PC-9 (cell line): ENCODE measurements at regions of chr2 and their contacts with region 1.

Region 1: GRCh38 chr2:227655454-227655853 is 11.2 kb upstream of the SCYGR5 start:
- DNase-seq: peak; percentile 12 to 81
- H3K4me3 ChIP-seq: no peak overlapping the region
- H3K27ac ChIP-seq: no peak overlapping the region
- H3K4me1 ChIP-seq: peaks cover 15% of the 10 kb centered on the region
- H3K27me3 ChIP-seq: no peaks in the 10 kb centered on the region
- CTCF ChIP-seq: no peak

Region 2: DNA sequence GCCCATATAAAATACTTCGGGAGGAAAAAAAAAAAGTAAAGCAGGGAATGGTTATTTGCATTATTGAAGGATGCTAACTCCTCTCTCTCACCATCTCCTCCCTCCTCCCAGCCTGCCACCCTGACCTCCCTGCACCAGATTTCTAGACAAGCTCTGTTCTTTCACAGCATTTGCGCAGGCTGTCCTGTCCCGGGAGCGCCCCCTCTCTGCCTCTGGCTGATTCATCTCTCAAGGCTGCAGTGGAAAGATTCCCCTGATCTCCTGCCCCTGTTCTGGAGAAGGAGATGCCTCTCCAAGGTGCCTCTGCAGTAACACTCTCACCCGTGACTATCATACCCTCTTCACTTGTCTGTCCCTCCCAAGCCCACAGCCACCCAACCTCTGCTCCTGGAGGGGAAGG is 529.9 kb before region 1 on chr2:
- CTCF ChIA-PET with region 1: no interaction called
- POLR2A ChIA-PET with region 1: no interaction called
- intact Hi-C with region 1: loop called (anchors 10 kb)
- DNase-seq: no peak
- H3K4me3 ChIP-seq: no peak overlapping the region
- H3K27ac ChIP-seq: no peak overlapping the region
- H3K4me1 ChIP-seq: no peaks in the 10 kb centered on the region
- H3K27me3 ChIP-seq: no peaks in the 10 kb centered on the region
- CTCF ChIP-seq: no peak

Region 3: GRCh38 chr2:227703280-227703732 is 47.9 kb after region 1 on chr2:
- CTCF ChIA-PET with region 1: no interaction called
- POLR2A ChIA-PET with region 1: no interaction called
- intact Hi-C with region 1: loop called (anchors 5 kb)
- DNase-seq: peak; percentile 75 to 94
- H3K4me3 ChIP-seq: peak overlapping the region; percentile 41
- H3K27ac ChIP-seq: peak overlapping the region; percentile 92
- H3K4me1 ChIP-seq: peaks cover 37% of the 10 kb centered on the region
- H3K27me3 ChIP-seq: no peaks in the 10 kb centered on the region
- CTCF ChIP-seq: no peak

Region 4: DNA sequence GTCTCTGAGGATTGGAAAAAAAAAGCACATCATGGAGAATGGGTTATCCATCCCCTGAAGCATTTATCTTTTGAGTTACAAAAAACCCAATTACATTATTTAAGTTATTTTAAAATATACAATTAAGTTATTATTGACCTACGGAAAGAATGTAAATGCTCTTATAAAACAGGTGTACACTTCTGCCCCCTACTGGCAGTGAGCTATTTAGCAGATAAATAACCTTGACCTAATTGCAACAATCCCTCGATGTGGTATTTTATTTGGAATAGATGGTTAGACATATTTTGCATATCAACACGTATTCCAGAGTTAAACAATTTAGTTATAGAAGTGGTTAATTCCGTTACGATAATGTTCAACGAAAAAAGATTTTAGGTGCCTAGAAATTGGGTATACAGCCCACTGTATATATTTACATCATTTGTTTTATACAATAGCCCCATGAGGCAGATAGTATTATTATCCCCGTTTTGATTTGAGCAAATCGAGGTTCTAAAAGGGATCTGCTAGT is 206.8 kb after region 1 on chr2:
- CTCF ChIA-PET with region 1: interaction called, 8 read pairs
- POLR2A ChIA-PET with region 1: no interaction called
- intact Hi-C with region 1: loop called (anchors 2 kb)
- DNase-seq: no peak
- H3K4me3 ChIP-seq: no peak overlapping the region
- H3K27ac ChIP-seq: peak overlapping the region; percentile 93
- H3K4me1 ChIP-seq: peaks cover 29% of the 10 kb centered on the region
- H3K27me3 ChIP-seq: no peaks in the 10 kb centered on the region
- CTCF ChIP-seq: peak; percentile 75

Region 5: DNA sequence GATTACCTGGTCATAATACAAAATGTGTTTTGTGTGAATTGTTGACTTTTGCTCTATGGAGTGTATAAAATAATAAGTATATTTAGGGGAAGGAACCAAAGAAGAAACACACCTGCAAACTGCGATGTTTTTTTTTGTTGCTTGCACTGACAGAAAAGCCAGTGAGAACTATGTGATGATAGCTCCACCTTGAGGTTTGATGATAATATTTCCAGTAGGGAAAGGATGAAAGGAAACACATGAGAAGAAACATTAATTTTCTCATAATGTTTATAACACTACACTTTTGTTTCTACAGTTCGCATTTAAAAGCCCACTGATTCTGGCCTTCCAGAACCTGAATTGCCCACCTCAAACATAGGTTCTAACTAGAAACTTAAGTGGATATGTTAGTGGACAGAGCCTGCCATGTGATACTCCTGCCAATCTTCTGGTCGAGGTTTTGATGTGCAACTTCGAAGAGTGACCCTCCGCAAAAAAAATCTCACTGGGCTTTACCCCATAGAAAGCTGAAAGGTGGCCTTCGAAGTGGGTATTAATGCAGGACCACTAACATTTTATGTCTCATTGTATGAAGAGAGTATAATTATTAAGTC is 1002.5 kb after region 1 on chr2:
- CTCF ChIA-PET with region 1: no interaction called
- POLR2A ChIA-PET with region 1: no interaction called
- intact Hi-C with region 1: loop called (anchors 5 kb)
- DNase-seq: peak; percentile 1 to 41
- H3K4me3 ChIP-seq: no peak overlapping the region
- H3K27ac ChIP-seq: no peak overlapping the region
- H3K4me1 ChIP-seq: 0 out of 2 replicates have a peak, but pooled peaks cover 4% of the 10 kb centered on the region
- H3K27me3 ChIP-seq: no peaks in the 10 kb centered on the region
- CTCF ChIP-seq: peak; percentile 76